ENCODE measurements at regions of chr19 and their contacts with region 1.

Region 1: GRCh38 chr19:18109733-18110595 is 12.4 kb downstream of the MAST3 start:
- DNase-seq: peak; percentile 31 to 68 (median 46)
- H3K4me3 ChIP-seq: peak overlapping the region; percentile 61
- H3K4me3 Mint-ChIP-seq: peak overlapping the region; percentile 73 to 93 (median 86)
- H3K27ac ChIP-seq: peak overlapping the region; percentile 51
- H3K27ac Mint-ChIP-seq: peak overlapping the region in 5 of 8 donors; percentile 59 to 92 (median 89)
- H3K4me1 ChIP-seq: peaks cover 13% of the 10 kb centered on the region
- H3K4me1 Mint-ChIP-seq: peaks cover 16 to 30% (median 18%) of the 10 kb centered on the region in 3 donors
- H3K27me3 ChIP-seq: no peaks in the 10 kb centered on the region
- H3K27me3 Mint-ChIP-seq: no peaks in the 10 kb centered on the region

Region 2: GRCh38 chr19:18091217-18091608 is 18.8 kb before region 1 on chr19:
- CTCF ChIA-PET with region 1: interaction called, 19 read pairs
- POLR2A ChIA-PET with region 1: interaction called, 18 read pairs
- DNase-seq: peak; percentile 76 to 89 (median 83)
- H3K4me3 ChIP-seq: peak overlapping the region; percentile 41
- H3K4me3 Mint-ChIP-seq: peak overlapping the region; percentile 25 to 86 (median 74)
- H3K27ac ChIP-seq: peak overlapping the region; percentile 75
- H3K27ac Mint-ChIP-seq: peak overlapping the region; percentile 96 to 100 (median 98)
- H3K4me1 ChIP-seq: peaks cover 62% of the 10 kb centered on the region
- H3K4me1 Mint-ChIP-seq: peaks cover 49 to 63% (median 57%) of the 10 kb centered on the region in 3 donors
- H3K27me3 ChIP-seq: no peaks in the 10 kb centered on the region
- H3K27me3 Mint-ChIP-seq: peaks cover 0 to 3% of the 10 kb centered on the region in 2 donors